A549 (cell line): ENCODE measurements at regions of chr12 and their contacts with region 1.

Region 1: DNA sequence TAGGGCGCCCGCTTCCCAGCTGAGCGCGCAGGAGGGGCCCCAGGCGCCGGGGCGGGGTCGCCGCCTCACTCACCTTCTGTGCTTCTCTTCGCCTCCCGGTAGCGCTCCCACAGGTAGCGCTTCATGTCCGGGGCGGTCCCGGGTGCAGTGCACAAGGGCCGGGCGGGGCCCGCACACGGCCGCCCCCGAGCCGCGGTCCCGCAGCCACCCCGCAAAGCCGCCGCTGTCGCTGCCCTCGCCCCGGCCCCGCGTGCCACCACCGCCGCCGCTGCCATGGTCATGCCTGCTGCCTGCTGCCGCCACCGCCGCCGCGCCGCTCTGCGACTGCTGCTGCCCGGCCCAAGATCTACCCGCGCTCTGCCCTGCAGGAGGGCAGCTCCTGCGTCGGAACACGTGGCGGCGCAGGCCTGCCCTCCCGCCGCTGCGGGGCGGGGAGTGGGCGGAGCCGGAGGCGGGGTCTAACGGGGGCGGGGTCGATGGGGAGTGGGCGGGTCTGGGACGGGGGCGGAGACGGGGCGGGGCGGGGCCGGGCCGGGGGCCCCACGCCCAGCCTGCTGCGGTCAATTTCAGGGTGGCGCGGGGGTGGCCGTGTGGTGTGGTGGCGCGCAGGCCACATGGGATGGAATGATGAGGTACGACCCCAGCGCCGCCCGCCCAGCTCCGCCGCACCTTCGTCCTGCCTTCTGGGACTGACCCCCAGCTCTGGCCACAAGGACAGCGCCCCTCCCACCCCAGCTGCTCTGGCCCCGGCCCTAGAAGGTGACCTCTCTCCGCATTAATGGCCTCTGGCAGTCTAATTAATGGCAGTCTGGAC is at the start of gene NT5DC3:
- DNase-seq: peak; percentile 62 to 91
- ATAC-seq: peak; percentile 82 to 88
- H3K4me3 ChIP-seq: peak within 1 kb of the TSS; percentile 98
- H3K27ac ChIP-seq: peak within 1 kb of the TSS; percentile 93 to 97
- H3K4me1 ChIP-seq: peaks cover 25% of the 10 kb centered on the region
- CTCF ChIP-seq: no peak
- EP300 ChIP-seq: no peak
- POLR2A ChIP-seq: peak; percentile 97
- RAD21 ChIP-seq: 0 out of 5 replicates have a peak, but pooled peaks of 1 of the 2 experiments have one; percentile 20
- polyA plus RNA-seq, gene NT5DC3: 5.2 and 8.8 TPM in 2 replicates

Region 2: GRCh38 chr12:103779428-103780092 is 61.5 kb before region 1 on chr12:
- CTCF ChIA-PET with region 1: interaction called, 5 read pairs
- POLR2A ChIA-PET with region 1: interaction called, 11 read pairs
- DNase-seq: no peak
- ATAC-seq: no peak
- H3K4me3 ChIP-seq: no peak overlapping the region
- H3K27ac ChIP-seq: peak overlapping the region; percentile 37 to 68; a peak in 3 of 6 replicates
- H3K4me1 ChIP-seq: peaks cover 9% of the 10 kb centered on the region
- CTCF ChIP-seq: no peak
- EP300 ChIP-seq: no peak
- POLR2A ChIP-seq: no peak
- RAD21 ChIP-seq: no peak

Region 3: DNA sequence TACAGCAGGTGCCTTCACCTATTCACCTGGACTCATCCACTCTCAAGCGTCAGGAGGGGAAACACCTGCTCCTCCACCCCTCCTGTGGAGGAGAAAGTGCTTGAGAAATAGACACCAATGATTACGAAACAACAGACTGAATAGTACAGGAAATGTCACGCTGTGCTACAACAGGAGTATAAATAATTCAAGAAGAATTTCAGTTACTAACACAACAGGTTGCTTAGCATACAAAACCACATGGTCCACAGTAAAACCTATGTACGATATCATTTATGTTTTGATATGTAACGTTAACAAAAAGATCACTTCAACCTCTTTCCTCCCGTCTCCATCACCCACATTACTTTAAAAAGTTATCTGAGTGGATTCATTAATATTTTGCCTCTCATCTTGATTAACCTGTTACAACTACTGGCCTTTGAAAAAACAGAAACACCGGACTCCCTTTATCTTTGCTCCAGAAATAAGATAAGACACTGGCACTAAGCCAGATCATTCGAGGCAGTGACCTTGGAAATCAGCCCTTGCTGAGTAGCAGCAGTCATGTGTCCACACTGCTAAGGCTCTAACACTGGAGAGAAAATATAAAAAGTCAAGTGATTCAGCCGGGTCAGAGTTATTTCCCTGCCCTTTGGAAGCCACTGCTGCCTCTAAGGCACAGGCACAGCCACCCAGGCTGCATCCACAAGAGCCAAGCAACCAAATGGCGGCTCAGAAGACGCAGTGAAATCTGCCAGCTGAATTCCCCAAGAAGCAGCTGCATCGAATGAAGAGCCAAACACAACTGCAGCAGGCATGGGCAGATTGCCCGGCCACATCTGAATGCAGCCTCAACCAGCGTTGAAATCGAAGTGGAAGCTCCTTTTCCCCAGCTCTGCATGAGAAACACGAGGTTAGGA is 41.0 kb before region 1 on chr12:
- CTCF ChIA-PET with region 1: interaction called, 3 read pairs
- POLR2A ChIA-PET with region 1: interaction called, 14 read pairs
- DNase-seq: peak; percentile 28 to 70
- ATAC-seq: peak; percentile 40 to 60
- H3K4me3 ChIP-seq: no peak overlapping the region
- H3K27ac ChIP-seq: peak overlapping the region; percentile 60 to 83
- H3K4me1 ChIP-seq: peaks cover 66% of the 10 kb centered on the region
- CTCF ChIP-seq: no peak
- EP300 ChIP-seq: no peak; a peak in 1 of 5 replicates
- POLR2A ChIP-seq: no peak
- RAD21 ChIP-seq: no peak

Region 4: GRCh38 chr12:103806803-103807202 is 34.3 kb before region 1 on chr12:
- CTCF ChIA-PET with region 1: no interaction called
- POLR2A ChIA-PET with region 1: interaction called, 14 read pairs
- DNase-seq: no peak
- ATAC-seq: no peak
- H3K4me3 ChIP-seq: no peak overlapping the region
- H3K27ac ChIP-seq: peak overlapping the region in 1 of 2 experiments; percentile 83; a peak in 3 of 6 replicates
- H3K4me1 ChIP-seq: peaks cover 46% of the 10 kb centered on the region
- CTCF ChIP-seq: no peak
- EP300 ChIP-seq: no peak
- POLR2A ChIP-seq: no peak
- RAD21 ChIP-seq: no peak

Region 5: DNA sequence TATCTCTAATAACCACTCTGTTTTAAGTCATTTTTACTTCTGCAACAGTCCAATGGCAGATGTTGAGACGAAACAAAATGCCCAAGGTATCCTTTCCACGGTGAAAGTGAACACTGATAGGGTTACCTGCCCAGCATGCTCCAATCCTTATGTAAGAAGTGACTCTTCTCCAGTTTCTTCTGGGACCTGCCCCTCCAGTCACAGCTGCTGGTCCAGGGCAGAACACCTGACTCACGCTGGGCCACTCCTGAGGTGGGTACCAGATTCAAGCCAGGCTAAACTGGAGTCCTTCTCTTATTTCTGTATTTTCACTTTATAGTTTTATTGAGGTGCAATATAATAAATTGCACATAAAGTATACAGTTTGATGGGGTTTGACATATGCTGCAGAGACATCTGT is 16.8 kb before region 1 on chr12:
- CTCF ChIA-PET with region 1: no interaction called
- POLR2A ChIA-PET with region 1: no interaction called
- DNase-seq: no peak
- ATAC-seq: peak in 1 of 2 experiments; percentile 29; a peak in 2 of 6 replicates
- H3K4me3 ChIP-seq: no peak overlapping the region
- H3K27ac ChIP-seq: no peak overlapping the region
- H3K4me1 ChIP-seq: peaks cover 13% of the 10 kb centered on the region
- CTCF ChIP-seq: no peak
- EP300 ChIP-seq: no peak
- POLR2A ChIP-seq: no peak
- RAD21 ChIP-seq: no peak